Mammary epithelial cell (primary cell): ENCODE measurements at regions of chr4 and their contacts with region 1.

Region 1: DNA sequence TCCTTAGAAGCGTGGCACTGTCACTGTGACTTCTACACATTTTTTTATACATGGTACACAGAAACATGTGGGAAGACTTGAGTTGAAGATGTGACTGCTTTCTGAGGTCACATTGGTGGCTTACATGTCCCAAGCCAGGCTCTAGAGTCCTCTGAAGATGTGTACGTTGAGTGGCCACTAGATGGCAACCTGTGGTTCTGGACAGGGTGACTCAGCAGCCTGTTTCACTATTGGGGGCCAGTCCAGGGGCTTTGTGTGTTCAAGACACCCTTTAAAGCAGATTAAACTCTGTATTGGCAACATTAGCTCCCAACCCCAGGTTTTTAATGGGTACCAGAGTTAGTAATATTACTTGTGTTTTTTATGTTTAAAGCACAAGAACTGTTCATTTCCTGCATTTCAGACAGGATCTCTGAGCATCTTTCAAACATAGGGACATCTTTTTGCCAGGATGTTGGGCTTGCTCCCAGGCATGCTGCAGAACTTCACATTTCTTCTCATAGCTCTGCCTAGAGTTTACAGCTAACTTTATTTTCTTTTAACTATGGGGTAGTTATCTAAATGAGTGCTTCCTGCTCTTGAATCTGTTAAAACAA is 53.0 kb downstream of the DCUN1D4 start:
- DNase-seq: peak; percentile 29
- H3K4me3 ChIP-seq: no peak overlapping the region
- H3K27ac ChIP-seq: no peak overlapping the region
- H3K4me1 ChIP-seq: no peaks in the 10 kb centered on the region
- H3K27me3 ChIP-seq: no peaks in the 10 kb centered on the region
- CTCF ChIP-seq: peak; percentile 85 to 87

Region 2: GRCh38 chr4:51831133-51831532 is 64.8 kb before region 1 on chr4:
- CTCF ChIA-PET with region 1: no interaction called
- dilution Hi-C with region 1: no loop called
- in situ Hi-C with region 1: no loop called
- intact Hi-C with region 1: no loop called
- DNase-seq: peak; percentile 29
- H3K4me3 ChIP-seq: no peak overlapping the region
- H3K27ac ChIP-seq: no peak overlapping the region
- H3K4me1 ChIP-seq: no peaks in the 10 kb centered on the region
- H3K27me3 ChIP-seq: peaks cover 2% of the 10 kb centered on the region
- CTCF ChIP-seq: peak; percentile 65 to 82

Region 3: DNA sequence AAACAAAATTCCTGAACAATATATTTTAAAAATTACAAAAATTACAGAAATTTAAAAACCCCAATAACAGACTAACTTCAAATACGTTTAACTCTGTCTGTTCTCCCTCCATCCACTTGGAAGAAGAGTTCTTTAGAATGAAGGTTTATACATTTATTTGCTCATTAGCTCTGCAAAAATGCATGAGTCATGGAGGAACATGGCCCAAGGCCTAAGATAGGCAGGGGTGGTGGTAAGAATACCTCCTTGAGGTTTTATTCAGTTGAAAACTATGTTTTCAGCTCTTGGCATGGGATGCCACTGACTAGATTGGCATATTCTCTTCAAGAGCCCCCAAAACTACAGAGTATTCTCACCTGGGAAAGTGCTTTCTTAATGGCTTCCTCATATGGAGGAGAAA is 133.1 kb after region 1 on chr4:
- CTCF ChIA-PET with region 1: no interaction called
- dilution Hi-C with region 1: no loop called
- in situ Hi-C with region 1: loop called in 1 of 2 experiments (anchors 10 kb)
- intact Hi-C with region 1: loop called (anchors 1 kb)
- DNase-seq: peak; percentile 72
- H3K4me3 ChIP-seq: no peak overlapping the region
- H3K27ac ChIP-seq: no peak overlapping the region
- H3K4me1 ChIP-seq: peaks cover 4% of the 10 kb centered on the region
- H3K27me3 ChIP-seq: no peaks in the 10 kb centered on the region
- CTCF ChIP-seq: no peak

Region 4: DNA sequence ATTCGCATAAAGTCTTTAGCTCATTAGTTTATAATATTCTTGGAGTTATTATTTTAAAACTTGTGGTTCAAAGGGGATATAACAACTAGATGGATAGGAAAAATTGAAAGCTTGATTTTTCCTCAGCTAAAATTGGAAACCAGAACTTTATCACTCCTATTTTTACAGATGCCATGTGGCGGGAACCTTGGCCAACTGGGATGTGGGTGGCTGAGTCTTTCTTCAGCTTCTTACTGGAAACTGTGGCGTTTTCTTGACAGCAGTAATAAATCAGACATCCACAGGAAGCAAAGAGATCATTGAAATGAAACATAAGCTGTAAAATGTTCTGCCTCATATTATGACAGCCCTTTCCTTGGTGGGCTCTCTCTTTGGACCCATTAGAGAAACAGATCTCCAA is 239.3 kb after region 1 on chr4:
- CTCF ChIA-PET with region 1: no interaction called
- dilution Hi-C with region 1: no loop called
- in situ Hi-C with region 1: no loop called
- intact Hi-C with region 1: loop called (anchors 10 kb)
- DNase-seq: no peak
- H3K4me3 ChIP-seq: no peak overlapping the region
- H3K27ac ChIP-seq: no peak overlapping the region
- H3K4me1 ChIP-seq: no peaks in the 10 kb centered on the region
- H3K27me3 ChIP-seq: no peaks in the 10 kb centered on the region
- CTCF ChIP-seq: no peak